ENCODE measurements at regions of chr11 and their contacts with region 1.

Region 1: GRCh38 chr11:11977206-11977938 is 31.1 kb downstream of the DKK3 start:
- DNase-seq: peak; percentile 71 to 83
- ATAC-seq: peak in 7 of 8 donors; percentile 17 to 49 (median 39)
- H3K4me3 ChIP-seq: peak overlapping the region in 2 of 10 donors; percentile 5
- H3K27ac ChIP-seq: peak overlapping the region; percentile 8 to 92 (median 86)
- H3K4me1 ChIP-seq: peaks cover 80 to 100% (median 96%) of the 10 kb centered on the region in 9 donors
- H3K27me3 ChIP-seq: no peaks in the 10 kb centered on the region
- CTCF ChIP-seq: no peak

Region 2: DNA sequence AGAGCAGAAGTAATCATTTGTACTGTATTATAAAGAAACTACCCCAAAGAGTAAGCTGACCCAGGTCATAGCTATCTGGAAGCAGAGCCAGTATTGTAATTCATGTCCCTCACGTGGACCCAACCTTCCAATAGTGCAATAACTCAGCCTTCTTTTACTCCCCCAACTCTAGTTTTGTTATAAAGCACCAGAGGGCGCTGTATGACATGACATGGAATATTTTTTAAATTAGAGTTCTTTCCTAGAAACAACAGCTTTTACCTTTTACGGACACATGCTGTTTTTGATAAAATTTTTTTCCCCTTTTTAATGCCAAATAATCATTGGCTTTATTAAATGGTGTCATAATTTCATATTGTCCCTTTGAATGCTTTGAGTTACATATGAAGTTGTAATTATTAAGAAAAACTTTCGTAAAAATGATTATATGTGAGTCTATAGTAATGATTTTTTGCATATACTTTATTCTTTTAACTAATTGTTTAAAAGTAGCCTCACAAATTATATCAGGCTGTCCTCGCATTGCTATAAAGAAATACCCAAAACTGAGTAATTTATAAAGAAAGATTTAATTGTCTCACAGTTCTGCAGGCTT is 45.8 kb before region 1 on chr11:
- intact Hi-C with region 1: no loop called
- DNase-seq: peak in 1 of 2 donors; percentile 27
- ATAC-seq: peak in 6 of 8 donors; percentile 55 to 73 (median 63)
- H3K4me3 ChIP-seq: no peak overlapping the region
- H3K27ac ChIP-seq: no peak overlapping the region
- H3K4me1 ChIP-seq: peaks cover 0 to 6% (median 0%) of the 10 kb centered on the region in 9 donors
- H3K27me3 ChIP-seq: no peaks in the 10 kb centered on the region
- CTCF ChIP-seq: peak; percentile 40 to 79 (median 73)

Region 3: DNA sequence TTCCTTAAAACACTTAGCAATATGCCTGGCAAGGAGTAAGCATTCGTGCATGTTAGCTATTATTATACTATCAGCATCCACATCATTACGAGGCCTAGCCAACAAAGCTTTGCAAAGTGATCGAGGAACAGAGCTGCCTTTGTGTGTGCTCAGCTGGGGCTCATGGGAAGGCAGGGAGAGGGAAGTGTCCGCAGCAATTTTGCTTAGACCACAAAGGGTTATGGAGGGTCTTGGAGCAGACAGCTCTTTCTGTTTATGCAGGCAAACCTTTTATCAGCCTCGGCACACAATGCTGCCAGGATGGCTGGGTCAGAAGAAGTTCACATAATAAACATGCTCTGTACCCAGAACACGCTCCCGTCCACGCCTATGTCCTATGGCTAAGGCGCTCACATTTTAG is 42.0 kb after region 1 on chr11:
- intact Hi-C with region 1: loop called in 4 of 10 experiments (anchors 5 to 10 kb)
- DNase-seq: no peak
- ATAC-seq: peak in 7 of 8 donors; percentile 30 to 59 (median 38)
- H3K4me3 ChIP-seq: no peak overlapping the region
- H3K27ac ChIP-seq: peak overlapping the region; percentile 33 to 85 (median 72)
- H3K4me1 ChIP-seq: peaks cover 11 to 47% (median 33%) of the 10 kb centered on the region in 9 donors
- H3K27me3 ChIP-seq: no peaks in the 10 kb centered on the region
- CTCF ChIP-seq: no peak

Region 4: DNA sequence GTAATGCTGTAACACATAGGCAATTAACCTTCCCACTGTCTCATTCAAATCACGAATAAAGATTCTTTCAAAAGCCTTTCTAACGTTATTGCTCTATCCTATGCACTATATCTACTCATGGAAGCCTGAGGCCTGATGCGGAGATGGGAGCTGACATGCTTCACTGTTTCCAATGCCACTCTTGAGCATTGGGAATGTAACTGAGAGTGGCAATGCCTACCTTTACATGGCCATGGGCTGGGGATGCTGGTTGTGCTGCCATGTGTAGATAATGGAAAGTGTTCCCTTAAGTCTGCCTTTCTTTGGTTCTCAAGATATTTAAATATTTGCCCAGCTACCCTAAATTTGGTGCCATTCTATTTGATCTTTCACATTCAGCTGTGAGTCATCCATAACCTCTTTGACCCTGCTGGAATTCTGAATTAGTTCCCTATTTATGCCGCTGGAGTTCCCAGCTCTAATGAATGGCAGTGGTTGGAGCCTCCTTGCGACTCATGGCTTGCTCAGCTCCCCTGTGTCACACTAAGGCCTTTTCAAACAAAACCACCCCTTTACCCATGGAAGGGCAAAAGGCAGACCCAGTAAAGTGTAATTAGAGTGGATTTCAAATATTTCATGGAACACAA is 52.5 kb after region 1 on chr11:
- intact Hi-C with region 1: loop called in 1 of 10 experiments (anchors 10 kb)
- DNase-seq: no peak
- ATAC-seq: no peak
- H3K4me3 ChIP-seq: no peak overlapping the region
- H3K27ac ChIP-seq: no peak overlapping the region
- H3K4me1 ChIP-seq: peaks cover 0 to 19% (median 0%) of the 10 kb centered on the region in 9 donors
- H3K27me3 ChIP-seq: no peaks in the 10 kb centered on the region
- CTCF ChIP-seq: no peak